ENCODE measurements at regions of chr4 and their contacts with region 1.

Region 1: DNA sequence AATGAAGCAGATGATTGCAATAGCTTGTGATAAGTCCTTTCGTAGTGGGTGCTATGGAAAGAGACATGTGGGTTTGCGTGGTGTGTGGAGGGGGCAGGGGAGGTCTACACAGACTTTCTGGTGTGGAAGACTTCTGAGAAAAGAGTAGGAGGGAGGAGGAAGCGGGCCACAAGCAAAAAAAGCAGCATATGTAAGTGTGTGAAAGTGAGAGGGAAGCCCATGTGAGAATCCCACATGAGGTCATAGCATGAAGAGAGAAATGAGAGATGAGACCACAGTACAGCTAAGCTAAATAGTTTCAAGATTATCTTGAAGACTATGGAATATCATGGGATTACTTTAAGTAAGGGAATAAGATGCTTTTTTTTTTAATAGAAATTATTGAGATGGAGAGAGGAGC is 2039.9 kb upstream of the TENM3 start:
- DNase-seq: peak; percentile 32
- CTCF ChIP-seq: no peak

Region 2: GRCh38 chr4:180179146-180179545 is 24.2 kb before region 1 on chr4:
- CTCF ChIA-PET with region 1: no interaction called
- POLR2A ChIA-PET with region 1: no interaction called
- DNase-seq: no peak
- CTCF ChIP-seq: no peak

Region 3: GRCh38 chr4:180190382-180190781 is 13.0 kb before region 1 on chr4:
- CTCF ChIA-PET with region 1: interaction called, 12 read pairs
- POLR2A ChIA-PET with region 1: no interaction called
- DNase-seq: no peak
- CTCF ChIP-seq: no peak

Measured in GM10248 (cell line).